CD14-positive monocyte (primary cell): ENCODE measurements at regions of chr3 and their contacts with region 1.

Region 1: DNA sequence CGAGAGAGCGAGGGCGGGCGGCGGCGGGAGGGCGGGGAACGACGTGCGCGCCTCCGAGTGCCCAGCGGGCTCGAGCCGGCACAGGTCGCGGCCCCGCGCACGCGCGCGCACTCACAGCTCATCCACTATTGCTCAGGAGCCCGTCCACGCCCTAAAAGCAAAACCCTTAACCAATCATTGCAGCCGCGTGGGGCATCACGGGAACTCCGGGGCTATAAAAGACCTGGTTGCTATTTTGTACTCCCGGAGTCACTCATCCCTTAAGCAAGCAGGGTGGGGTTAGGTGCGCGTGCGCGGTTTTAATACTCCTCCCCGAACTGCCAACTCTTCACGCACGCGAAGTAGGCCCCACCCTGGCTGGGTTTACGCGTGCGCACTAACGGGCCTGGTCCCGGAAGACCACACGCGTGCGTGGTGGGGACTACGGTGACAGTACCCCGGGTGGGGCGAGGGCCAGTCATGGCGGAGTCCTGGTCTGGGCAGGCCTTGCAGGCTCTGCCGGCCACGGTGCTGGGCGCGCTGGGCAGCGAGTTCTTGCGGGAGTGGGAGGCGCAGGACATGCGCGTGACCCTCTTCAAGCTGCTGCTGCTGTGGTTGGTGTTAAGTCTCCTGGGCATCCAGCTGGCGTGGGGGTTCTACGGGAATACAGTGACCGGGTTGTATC is at the starts of genes RHOA and TCTA:
- DNase-seq: peak; percentile 100
- H3K4me3 ChIP-seq: peak within 1 kb of the TSS; percentile 91 to 99 (median 99)
- H3K4me3 Mint-ChIP-seq: peak within 1 kb of the TSS; percentile 87 to 93
- H3K27ac ChIP-seq: peak within 1 kb of the TSS; percentile 90
- H3K27ac Mint-ChIP-seq: peak within 1 kb of the TSS; percentile 91 to 96 (median 95)
- H3K4me1 ChIP-seq: peaks cover 68 to 80% of the 10 kb centered on the region in 2 donors
- H3K4me1 Mint-ChIP-seq: peaks cover 69% of the 10 kb centered on the region
- H3K27me3 ChIP-seq: no peaks in the 10 kb centered on the region
- H3K27me3 Mint-ChIP-seq: no peaks in the 10 kb centered on the region
- CTCF ChIP-seq: no peak
- polyA plus RNA-seq, gene RHOA: 624 to 1,306 (median 1,179) TPM
- polyA plus RNA-seq, gene TCTA: 22.4 to 35.5 (median 26.7) TPM

Region 2: DNA sequence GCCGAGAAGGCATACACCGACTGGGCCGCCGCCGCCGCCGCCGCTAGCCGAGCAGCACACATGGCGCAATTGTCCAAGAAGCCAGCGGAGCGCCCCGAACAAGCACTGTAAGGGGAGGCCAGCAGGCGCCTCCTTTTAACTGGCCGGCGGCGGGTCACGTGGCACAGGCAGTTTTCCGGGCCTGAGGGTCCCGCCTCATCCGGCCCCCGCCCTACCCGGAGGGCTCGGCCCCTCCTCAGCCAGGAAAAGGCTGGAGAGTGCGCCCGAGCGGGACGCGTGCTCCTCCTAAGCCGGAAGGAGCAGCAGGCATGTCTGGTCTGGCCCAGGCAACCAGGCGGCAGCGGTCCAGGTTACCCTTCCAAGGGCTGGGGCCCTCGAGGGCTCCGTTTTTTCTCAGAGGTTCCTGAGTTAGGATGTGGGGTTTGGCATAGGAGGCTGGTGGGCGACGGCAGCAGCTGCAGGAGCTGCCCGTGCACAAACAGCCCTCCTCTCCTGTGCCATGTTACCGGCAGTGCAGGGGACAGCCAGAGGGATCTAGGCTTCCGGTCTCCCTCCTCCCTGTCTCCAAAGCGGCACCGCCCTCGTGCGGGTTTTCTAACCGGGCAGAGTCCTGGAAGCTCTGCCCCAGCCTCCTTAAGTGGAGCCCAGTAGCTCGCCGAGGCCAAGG is 53.8 kb before region 1 on chr3 and contains the start of gene GPX1:
- intact Hi-C with region 1: loop called in 1 of 2 experiments (anchors 5 kb)
- DNase-seq: peak; percentile 87 to 89 (median 88)
- H3K4me3 ChIP-seq: peak within 1 kb of the TSS; percentile 87 to 95 (median 93)
- H3K4me3 Mint-ChIP-seq: peak within 1 kb of the TSS; percentile 98 to 99
- H3K27ac ChIP-seq: peak within 1 kb of the TSS; percentile 86 to 94
- H3K27ac Mint-ChIP-seq: peak within 1 kb of the TSS; percentile 97 to 99 (median 98)
- H3K4me1 ChIP-seq: peaks cover 42 to 58% of the 10 kb centered on the region in 2 donors
- H3K4me1 Mint-ChIP-seq: peaks cover 45% of the 10 kb centered on the region
- H3K27me3 ChIP-seq: no peaks in the 10 kb centered on the region
- H3K27me3 Mint-ChIP-seq: peaks cover 2% of the 10 kb centered on the region in 3 donors
- CTCF ChIP-seq: no peak
- polyA plus RNA-seq, gene GPX1: 1,287 to 2,105 (median 1,394) TPM

Region 3: DNA sequence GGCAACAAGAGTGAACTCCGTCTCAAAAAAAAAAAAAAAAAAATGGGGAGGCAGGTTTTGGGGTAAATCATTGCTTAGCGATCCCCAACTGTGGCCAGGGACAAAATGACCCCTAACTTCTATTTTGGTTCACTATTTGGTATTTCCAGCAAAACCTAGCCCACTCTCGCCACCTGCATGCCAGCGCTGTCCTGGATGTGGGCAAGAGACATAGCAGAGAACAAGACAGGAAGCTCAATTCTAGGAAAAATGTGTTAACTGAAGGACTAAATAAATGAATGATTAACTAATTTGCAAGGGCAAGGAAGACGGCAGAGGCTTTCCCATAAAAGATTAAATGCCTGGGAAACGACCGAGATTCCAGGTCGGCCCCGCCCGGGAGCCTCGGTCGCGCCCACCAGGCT is 16.6 kb after region 1 on chr3:
- intact Hi-C with region 1: loop called in 1 of 2 experiments (anchors 2 kb)
- DNase-seq: no peak
- H3K4me3 ChIP-seq: peak overlapping the region; percentile 33 to 95 (median 61)
- H3K4me3 Mint-ChIP-seq: peak overlapping the region; percentile 94 to 95
- H3K27ac ChIP-seq: peak overlapping the region; percentile 85 to 93
- H3K27ac Mint-ChIP-seq: peak overlapping the region in 5 of 7 donors; percentile 50 to 98 (median 97)
- H3K4me1 ChIP-seq: peaks cover 15 to 19% of the 10 kb centered on the region in 2 donors
- H3K4me1 Mint-ChIP-seq: peaks cover 14% of the 10 kb centered on the region
- H3K27me3 ChIP-seq: no peaks in the 10 kb centered on the region
- H3K27me3 Mint-ChIP-seq: no peaks in the 10 kb centered on the region
- CTCF ChIP-seq: no peak

Region 4: GRCh38 chr3:49445381-49445780 is 33.3 kb after region 1 on chr3:
- intact Hi-C with region 1: loop called in 1 of 2 experiments (anchors 5 kb)
- DNase-seq: no peak
- H3K4me3 ChIP-seq: peak overlapping the region in 1 of 3 experiments; percentile 20
- H3K4me3 Mint-ChIP-seq: no peak overlapping the region
- H3K27ac ChIP-seq: peak overlapping the region; percentile 79 to 83
- H3K27ac Mint-ChIP-seq: peak overlapping the region; percentile 87 to 95 (median 94)
- H3K4me1 ChIP-seq: peaks cover 42 to 43% of the 10 kb centered on the region in 2 donors
- H3K4me1 Mint-ChIP-seq: peaks cover 30% of the 10 kb centered on the region
- H3K27me3 ChIP-seq: no peaks in the 10 kb centered on the region
- H3K27me3 Mint-ChIP-seq: peaks cover 0 to 3% (median 0%) of the 10 kb centered on the region in 3 donors
- CTCF ChIP-seq: no peak

Region 5: DNA sequence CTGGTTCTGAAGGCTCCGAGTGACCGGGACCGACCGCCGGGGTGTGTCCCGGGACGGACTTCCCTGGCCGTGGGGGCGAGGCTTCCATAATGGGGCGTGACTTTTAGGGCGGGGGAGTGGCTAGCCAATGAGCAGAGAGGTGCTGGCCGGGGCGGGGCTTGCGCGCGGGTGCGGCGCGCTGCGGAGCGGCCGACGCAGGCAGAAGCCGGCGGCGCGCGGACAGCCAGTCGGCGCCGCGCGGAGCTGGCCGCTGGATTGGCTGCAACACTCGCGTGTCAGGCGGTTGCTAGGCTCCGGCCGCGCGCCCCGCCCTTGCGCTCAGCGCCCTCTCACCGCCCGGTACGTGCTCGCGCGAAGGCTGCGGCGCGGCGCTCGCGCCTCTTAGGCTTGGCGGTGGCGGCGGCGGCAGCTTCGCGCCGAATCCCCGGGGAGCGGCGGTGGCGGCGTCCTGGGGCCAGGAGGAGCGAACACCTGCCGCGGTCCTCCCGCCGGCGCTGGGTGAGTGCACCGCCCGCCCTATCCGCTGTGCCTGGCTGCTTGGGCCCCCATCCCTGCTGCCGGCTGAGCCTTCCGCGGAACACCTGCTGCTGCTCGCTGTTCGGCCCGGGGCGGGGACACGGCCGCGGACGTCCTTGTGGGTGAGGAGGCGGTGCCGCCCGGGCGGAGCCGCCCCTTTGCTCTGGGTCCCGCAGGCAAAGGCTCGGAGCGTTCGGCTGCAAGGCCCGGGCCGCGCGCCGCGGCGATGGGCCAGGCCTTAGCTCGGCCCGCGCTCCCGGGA is 58.0 kb after region 1 on chr3 and contains the start of gene DAG1:
- intact Hi-C with region 1: loop called in 1 of 2 experiments (anchors 10 kb)
- DNase-seq: peak; percentile 93 to 98 (median 95)
- H3K4me3 ChIP-seq: peak within 1 kb of the TSS; percentile 82 to 93 (median 86)
- H3K4me3 Mint-ChIP-seq: peak within 1 kb of the TSS; percentile 85 to 92
- H3K27ac ChIP-seq: peak within 1 kb of the TSS; percentile 82 to 90
- H3K27ac Mint-ChIP-seq: peak within 1 kb of the TSS; percentile 93 to 96 (median 95)
- H3K4me1 ChIP-seq: peaks cover 26 to 38% of the 10 kb centered on the region in 2 donors
- H3K4me1 Mint-ChIP-seq: peaks cover 34% of the 10 kb centered on the region
- H3K27me3 ChIP-seq: no peaks in the 10 kb centered on the region
- H3K27me3 Mint-ChIP-seq: peaks cover 20 to 34% (median 25%) of the 10 kb centered on the region in 3 donors
- CTCF ChIP-seq: no peak
- polyA plus RNA-seq, gene DAG1: 3.9 to 5.8 (median 4.2) TPM

Region 6: GRCh38 chr3:49802719-49803464 is 390.8 kb after region 1 on chr3 and contains the start of gene INKA1:
- intact Hi-C with region 1: no loop called
- DNase-seq: peak; percentile 78 to 86 (median 80)
- H3K4me3 ChIP-seq: peak within 1 kb of the TSS; percentile 76 to 99 (median 99)
- H3K4me3 Mint-ChIP-seq: peak within 1 kb of the TSS; percentile 90 to 95
- H3K27ac ChIP-seq: peak within 1 kb of the TSS; percentile 45 to 84
- H3K27ac Mint-ChIP-seq: peak within 1 kb of the TSS; percentile 83 to 93 (median 92)
- H3K4me1 ChIP-seq: peaks cover 46 to 56% of the 10 kb centered on the region in 2 donors
- H3K4me1 Mint-ChIP-seq: peaks cover 56% of the 10 kb centered on the region
- H3K27me3 ChIP-seq: peaks cover 0 to 5% of the 10 kb centered on the region in 2 donors
- H3K27me3 Mint-ChIP-seq: peaks cover 15 to 22% (median 17%) of the 10 kb centered on the region in 3 donors
- CTCF ChIP-seq: peak; percentile 95
- polyA plus RNA-seq, gene INKA1: 0.43 to 1.3 (median 1.3) TPM